H1 (cell line): ENCODE measurements at regions of chr19 and their contacts with region 1.

Region 1: DNA sequence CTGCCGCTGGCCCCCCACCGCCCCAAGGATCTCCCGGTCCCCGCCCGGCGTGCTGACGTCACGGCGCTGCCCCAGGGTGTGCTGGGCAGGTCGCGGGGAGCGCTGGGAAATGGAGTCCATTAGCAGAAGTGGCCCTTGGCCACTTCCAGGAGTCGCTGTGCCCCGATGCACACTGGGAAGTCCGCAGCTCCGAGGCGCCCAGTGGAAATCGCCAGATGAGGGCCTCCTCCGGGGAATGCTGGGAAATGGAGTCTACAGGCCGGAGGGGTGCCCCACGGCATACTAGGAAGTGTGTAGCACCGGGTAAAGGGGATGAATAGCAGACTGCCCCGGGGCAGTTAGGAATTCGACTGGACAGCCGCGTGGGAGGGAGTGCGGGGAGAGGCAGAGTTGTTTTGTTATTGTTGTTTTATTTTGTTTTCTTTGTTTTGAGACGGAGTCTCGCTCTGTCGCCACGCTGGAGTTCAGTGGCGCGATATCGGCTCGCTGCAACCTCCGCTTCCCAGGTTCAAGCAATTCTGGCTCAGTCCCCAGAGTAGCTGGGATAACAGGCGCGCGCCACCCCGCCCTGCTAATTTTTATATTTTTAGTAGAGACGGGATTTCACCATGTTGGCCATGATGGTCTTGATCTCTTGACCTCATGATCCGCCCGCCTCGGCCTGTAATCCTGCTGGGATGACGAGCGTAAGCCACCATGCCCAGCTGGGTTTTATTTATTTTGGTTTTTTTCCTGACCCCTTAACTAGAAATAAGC is at the start of gene PPP1R12C:
- DNase-seq: peak; percentile 92 to 93
- H3K4me3 ChIP-seq: peak within 1 kb of the TSS; percentile 83 to 92 (median 88)
- H3K27ac ChIP-seq: 0 out of 2 replicates have a peak within 1 kb of the TSS, but pooled peaks have one; percentile 46
- H3K4me1 ChIP-seq: peaks cover 0 to 23% (median 17%) of the 10 kb centered on the region in 4 experiments; a peak in 5 of 7 replicates
- H3K27me3 ChIP-seq: no peaks in the 10 kb centered on the region
- CTCF ChIP-seq: no peak
- EP300 ChIP-seq: no peak; a peak in 1 of 3 replicates
- POLR2A ChIP-seq: no peak
- RAD21 ChIP-seq: no peak
- total RNA-seq, gene PPP1R12C: 71.5 and 88.8 TPM in 2 replicates

Region 2: DNA sequence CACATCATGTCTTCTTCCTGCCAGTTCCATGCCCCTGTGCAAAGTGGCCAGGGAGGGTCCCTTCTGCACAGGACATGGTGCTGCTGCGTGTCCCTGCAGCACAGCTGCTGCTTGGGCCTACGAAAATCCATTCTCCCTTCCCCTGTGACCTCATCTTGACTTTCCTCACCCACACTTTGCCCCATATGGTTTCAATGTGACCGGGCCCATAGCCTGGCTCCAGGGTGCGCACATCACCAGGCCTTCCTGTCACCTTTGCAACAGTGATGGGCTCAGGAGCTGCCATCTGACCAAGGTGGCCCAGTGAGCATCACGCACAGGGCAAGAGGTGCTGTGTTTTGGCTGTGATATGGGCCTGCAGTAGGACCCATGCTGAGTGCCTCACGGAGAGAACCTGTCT is 11.2 kb before region 1 on chr19:
- CTCF ChIA-PET with region 1: interaction called, 11 read pairs
- POLR2A ChIA-PET with region 1: interaction called, 15 read pairs
- DNase-seq: no peak
- H3K4me3 ChIP-seq: no peak overlapping the region
- H3K27ac ChIP-seq: no peak overlapping the region
- H3K4me1 ChIP-seq: no peaks in the 10 kb centered on the region
- H3K27me3 ChIP-seq: no peaks in the 10 kb centered on the region
- CTCF ChIP-seq: no peak
- EP300 ChIP-seq: no peak
- POLR2A ChIP-seq: no peak
- RAD21 ChIP-seq: no peak

Region 3: DNA sequence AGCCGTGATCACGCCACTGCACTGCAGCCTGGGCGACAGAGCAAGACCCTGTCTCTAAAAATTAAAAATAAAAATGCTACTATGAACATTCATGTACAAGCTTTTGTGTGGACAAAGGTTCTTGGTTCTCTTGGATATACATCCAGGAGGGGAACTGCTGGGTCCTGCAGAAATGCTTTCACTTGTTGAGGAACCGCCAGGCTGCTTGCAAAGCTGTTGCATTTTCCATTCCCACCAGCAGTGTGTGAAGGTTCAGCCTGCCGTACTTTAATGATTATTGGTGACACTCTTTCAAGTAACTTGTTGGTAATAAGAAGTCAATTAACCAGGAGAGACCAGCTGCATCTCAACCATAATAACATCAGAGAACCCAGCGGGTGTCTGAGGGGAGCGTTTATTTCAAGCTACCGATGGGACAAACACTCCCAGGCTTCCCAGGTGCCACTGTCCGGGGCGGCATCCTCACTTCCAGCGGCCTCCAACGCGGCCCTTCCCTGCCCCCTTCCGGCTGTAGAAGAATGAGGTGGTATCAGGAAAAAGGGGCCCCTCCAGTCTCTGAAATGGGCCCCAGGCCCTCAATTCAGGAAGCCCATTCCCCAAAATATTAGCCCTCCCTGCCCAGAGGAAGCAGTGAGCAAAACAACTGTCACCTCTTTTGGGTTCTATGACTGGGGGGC is 14.8 kb after region 1 on chr19:
- CTCF ChIA-PET with region 1: interaction called, 6 read pairs
- POLR2A ChIA-PET with region 1: interaction called, 14 read pairs
- DNase-seq: no peak
- H3K4me3 ChIP-seq: no peak overlapping the region
- H3K27ac ChIP-seq: no peak overlapping the region
- H3K4me1 ChIP-seq: peaks cover 0 to 2% (median 0%) of the 10 kb centered on the region in 4 experiments; a peak in 1 of 7 replicates
- H3K27me3 ChIP-seq: no peaks in the 10 kb centered on the region
- CTCF ChIP-seq: 0 out of 4 replicates have a peak, but pooled peaks of 1 of the 3 experiments have one; percentile 5
- EP300 ChIP-seq: no peak
- POLR2A ChIP-seq: no peak
- RAD21 ChIP-seq: peak in 1 of 2 experiments; percentile 39; a peak in 2 of 4 replicates